GM12878 (cell line): ENCODE measurements at regions of chr6 and their contacts with region 1.

Region 1: DNA sequence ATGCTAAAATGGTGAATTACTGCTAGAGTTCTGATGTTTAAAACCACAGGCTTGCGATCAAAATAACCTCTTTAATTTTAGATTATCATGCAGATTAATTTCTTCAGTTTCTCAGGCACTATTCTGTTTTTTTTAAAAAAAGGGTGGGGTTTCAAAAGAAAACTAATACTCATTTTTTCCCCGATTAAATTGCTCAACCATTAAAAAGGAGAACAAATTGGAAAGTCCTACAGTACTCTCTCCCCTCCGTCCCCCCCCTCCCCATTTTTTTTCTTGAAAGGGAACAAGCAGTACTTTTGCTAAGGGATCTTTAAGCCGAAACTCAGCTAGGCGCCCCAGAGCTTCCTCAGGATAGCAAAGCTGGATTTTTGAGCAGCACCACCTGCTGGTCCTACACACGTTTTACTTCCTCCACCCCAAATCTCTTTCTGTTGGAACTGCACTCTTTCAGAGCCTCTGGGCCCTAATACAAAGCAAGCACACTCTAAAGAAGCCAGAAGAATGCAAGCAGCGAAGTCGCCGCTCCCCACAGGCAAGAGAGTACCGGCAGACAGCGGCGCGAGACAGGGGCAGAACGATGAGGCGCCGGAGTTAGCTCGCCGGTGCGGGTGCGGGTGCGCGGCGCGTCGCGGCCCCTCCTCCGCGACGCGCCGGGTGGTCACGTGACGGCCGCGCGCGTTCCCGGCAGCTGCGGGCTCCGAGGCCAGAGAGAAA is at the start of gene RNF146:
- DNase-seq: peak; percentile 55
- ATAC-seq: peak; percentile 85
- H3K4me3 ChIP-seq: peak within 1 kb of the TSS; percentile 98
- H3K27ac ChIP-seq: peak within 1 kb of the TSS; percentile 87
- H3K4me1 ChIP-seq: no peaks in the 10 kb centered on the region
- H3K27me3 ChIP-seq: no peaks in the 10 kb centered on the region
- CTCF ChIP-seq: peak; percentile 71 to 76 (median 74)
- EP300 ChIP-seq: no peak
- POLR2A ChIP-seq: no peak
- RAD21 ChIP-seq: peak; percentile 46; the same call in 1 of the 2 replicates
- polyA plus RNA-seq, gene RNF146: 9.3 to 12.4 TPM

Region 2: DNA sequence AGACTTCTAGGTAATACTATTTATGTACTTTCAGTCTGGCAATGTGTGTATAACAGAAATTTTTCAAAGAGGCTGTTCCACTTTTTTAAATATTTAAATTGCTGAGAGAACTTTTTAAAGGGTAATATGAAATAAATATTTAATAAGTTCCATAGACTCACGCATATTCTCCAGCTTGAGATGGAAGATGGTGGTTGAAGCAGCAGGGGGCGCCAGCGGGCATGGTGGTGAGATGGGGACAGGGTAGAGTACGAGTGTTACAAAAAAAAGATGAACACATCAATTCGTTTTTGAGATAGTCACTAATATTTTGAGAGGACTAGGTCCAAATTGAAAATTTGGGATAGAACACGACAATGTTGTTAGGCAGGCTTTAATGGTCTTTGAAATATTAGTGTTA is 79.4 kb before region 1 on chr6:
- CTCF ChIA-PET with region 1: interaction called, 58 read pairs
- POLR2A ChIA-PET with region 1: interaction called, 4 read pairs
- RAD21 ChIA-PET with region 1: interaction called, 10 read pairs
- SMC1A ChIA-PET with region 1: interaction called, 16 read pairs
- in situ Hi-C with region 1: no loop called
- intact Hi-C with region 1: no loop called
- DNase-seq: no peak
- ATAC-seq: peak; percentile 84
- H3K4me3 ChIP-seq: no peak overlapping the region
- H3K27ac ChIP-seq: no peak overlapping the region
- H3K4me1 ChIP-seq: no peaks in the 10 kb centered on the region
- H3K27me3 ChIP-seq: no peaks in the 10 kb centered on the region
- CTCF ChIP-seq: peak; percentile 58 to 67 (median 67)
- EP300 ChIP-seq: no peak
- POLR2A ChIP-seq: no peak
- RAD21 ChIP-seq: peak; percentile 50

Region 3: GRCh38 chr6:127247114-127248096 is 18.9 kb before region 1 on chr6:
- CTCF ChIA-PET with region 1: interaction called, 10 read pairs
- POLR2A ChIA-PET with region 1: no interaction called
- RAD21 ChIA-PET with region 1: interaction called, 4 read pairs
- SMC1A ChIA-PET with region 1: interaction called, 5 read pairs
- in situ Hi-C with region 1: no loop called
- intact Hi-C with region 1: no loop called
- DNase-seq: no peak
- ATAC-seq: no peak
- H3K4me3 ChIP-seq: no peak overlapping the region
- H3K27ac ChIP-seq: no peak overlapping the region
- H3K4me1 ChIP-seq: no peaks in the 10 kb centered on the region
- H3K27me3 ChIP-seq: no peaks in the 10 kb centered on the region; a peak in 1 of 4 replicates
- CTCF ChIP-seq: no peak
- EP300 ChIP-seq: no peak
- POLR2A ChIP-seq: no peak
- RAD21 ChIP-seq: no peak

Region 4: GRCh38 chr6:127282184-127282583 is 15.8 kb after region 1 on chr6:
- CTCF ChIA-PET with region 1: interaction called, 10 read pairs
- POLR2A ChIA-PET with region 1: interaction called, 3 read pairs
- RAD21 ChIA-PET with region 1: interaction called, 3 read pairs
- SMC1A ChIA-PET with region 1: interaction called, 5 read pairs
- in situ Hi-C with region 1: no loop called
- intact Hi-C with region 1: no loop called
- DNase-seq: no peak
- ATAC-seq: no peak
- H3K4me3 ChIP-seq: no peak overlapping the region
- H3K27ac ChIP-seq: no peak overlapping the region
- H3K4me1 ChIP-seq: no peaks in the 10 kb centered on the region
- H3K27me3 ChIP-seq: no peaks in the 10 kb centered on the region
- CTCF ChIP-seq: no peak
- EP300 ChIP-seq: no peak
- POLR2A ChIP-seq: no peak
- RAD21 ChIP-seq: no peak

Region 5: GRCh38 chr6:127291495-127291894 is 25.2 kb after region 1 on chr6:
- CTCF ChIA-PET with region 1: interaction called, 24 read pairs
- POLR2A ChIA-PET with region 1: interaction called, 24 read pairs
- RAD21 ChIA-PET with region 1: interaction called, 19 read pairs
- SMC1A ChIA-PET with region 1: interaction called, 12 read pairs
- in situ Hi-C with region 1: no loop called
- intact Hi-C with region 1: loop called (anchors 2 kb)
- DNase-seq: peak; percentile 39
- ATAC-seq: peak; percentile 95
- H3K4me3 ChIP-seq: no peak overlapping the region
- H3K27ac ChIP-seq: peak overlapping the region; percentile 15; the same call in 1 of the 2 replicates
- H3K4me1 ChIP-seq: peaks cover 13% of the 10 kb centered on the region; the same call in 1 of the 2 replicates
- H3K27me3 ChIP-seq: no peaks in the 10 kb centered on the region
- CTCF ChIP-seq: no peak
- EP300 ChIP-seq: peak in 1 of 2 experiments; percentile 50; a peak in 1 of 4 replicates
- POLR2A ChIP-seq: no peak
- RAD21 ChIP-seq: no peak

Region 6: DNA sequence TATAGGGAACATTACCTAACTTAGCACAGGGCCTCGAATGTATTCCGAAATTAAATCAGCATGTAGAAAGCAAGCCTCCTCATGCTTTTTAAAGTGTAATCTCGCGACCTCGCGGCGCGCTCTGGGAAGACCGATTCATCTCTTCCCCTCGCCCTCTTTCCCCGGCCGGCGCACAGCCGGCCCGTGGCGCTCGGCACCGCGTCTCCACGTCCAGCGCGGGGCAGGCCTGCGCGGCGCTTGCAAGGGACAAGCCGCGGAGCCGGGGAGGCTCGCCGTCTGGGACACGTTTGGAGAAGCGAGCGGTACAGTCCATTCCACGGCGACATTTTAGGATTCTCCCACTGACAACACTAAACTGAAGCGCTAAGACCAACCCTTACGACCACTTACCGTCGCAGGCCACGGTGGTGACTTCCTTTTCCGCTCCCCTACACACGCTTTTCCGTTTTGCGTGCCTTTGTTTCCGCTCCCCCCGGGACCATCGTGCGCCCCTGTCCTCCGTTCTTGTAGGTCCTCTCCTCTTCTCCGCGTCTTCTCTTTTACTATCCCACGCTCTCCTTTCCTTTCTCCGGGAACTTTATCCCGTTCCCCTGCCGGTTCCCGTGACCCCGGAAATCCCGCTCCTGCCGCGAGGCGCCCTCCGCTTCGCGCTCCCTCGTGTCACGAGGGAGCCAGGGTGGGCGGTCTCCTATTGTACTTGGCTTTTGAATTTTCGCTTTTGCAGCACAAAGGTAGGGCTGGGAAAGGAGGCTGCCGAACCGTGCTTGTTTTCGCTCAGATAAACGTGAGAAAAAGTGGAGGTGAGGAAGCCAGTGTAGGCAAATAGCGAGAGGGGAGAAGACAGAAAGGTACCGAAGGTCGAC is 76.8 kb after region 1 on chr6 and contains the start of gene ECHDC1:
- CTCF ChIA-PET with region 1: interaction called, 8 read pairs
- POLR2A ChIA-PET with region 1: interaction called, 9 read pairs
- RAD21 ChIA-PET with region 1: interaction called, 5 read pairs
- SMC1A ChIA-PET with region 1: interaction called, 4 read pairs
- in situ Hi-C with region 1: no loop called
- intact Hi-C with region 1: loop called (anchors 2 kb)
- DNase-seq: no peak
- ATAC-seq: peak; percentile 82
- H3K4me3 ChIP-seq: peak within 1 kb of the TSS; percentile 93
- H3K27ac ChIP-seq: peak within 1 kb of the TSS; percentile 98
- H3K4me1 ChIP-seq: peaks cover 10% of the 10 kb centered on the region
- H3K27me3 ChIP-seq: no peaks in the 10 kb centered on the region
- CTCF ChIP-seq: 0 out of 6 replicates have a peak, but pooled peaks of 1 of the 3 experiments have one; percentile 1
- EP300 ChIP-seq: no peak
- POLR2A ChIP-seq: peak; percentile 87
- RAD21 ChIP-seq: no peak
- polyA plus RNA-seq, gene ECHDC1: 71.6 to 85.4 TPM

Region 7: DNA sequence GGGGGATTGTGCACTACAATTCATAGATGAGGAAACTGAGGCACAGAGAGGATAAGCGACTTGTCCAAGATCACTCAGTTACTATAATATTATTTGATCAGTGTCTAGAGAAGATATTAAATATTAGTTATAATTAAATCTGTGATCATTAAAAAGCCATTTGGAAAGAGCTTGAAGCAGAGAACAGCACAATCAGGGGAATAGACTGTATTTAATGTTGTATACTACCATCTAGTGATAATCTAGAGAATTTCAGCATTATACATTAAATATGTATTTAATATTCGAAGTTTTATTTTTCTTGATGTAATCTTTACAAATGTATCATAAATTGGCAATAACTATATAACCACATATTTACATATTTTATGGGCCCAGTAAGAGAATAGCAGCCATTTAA is 272.9 kb after region 1 on chr6:
- CTCF ChIA-PET with region 1: interaction called, 10 read pairs
- POLR2A ChIA-PET with region 1: no interaction called
- RAD21 ChIA-PET with region 1: interaction called, 3 read pairs
- SMC1A ChIA-PET with region 1: no interaction called
- in situ Hi-C with region 1: no loop called
- intact Hi-C with region 1: no loop called
- DNase-seq: no peak
- ATAC-seq: peak; percentile 69
- H3K4me3 ChIP-seq: no peak overlapping the region
- H3K27ac ChIP-seq: no peak overlapping the region
- H3K4me1 ChIP-seq: no peaks in the 10 kb centered on the region
- H3K27me3 ChIP-seq: no peaks in the 10 kb centered on the region
- CTCF ChIP-seq: peak in 2 of 3 experiments; percentile 19 to 49; a peak in 2 of 6 replicates
- EP300 ChIP-seq: no peak
- POLR2A ChIP-seq: no peak
- RAD21 ChIP-seq: peak; percentile 53